Naive thymus-derived CD4-positive, alpha-beta T cell (primary cell): ENCODE measurements at regions of chr1 and their contacts with region 1.

Region 1: GRCh38 chr1:861714-862113 is 62.0 kb upstream of the SAMD11 start:
- DNase-seq: no peak
- ATAC-seq: no peak
- H3K4me3 ChIP-seq: no peak overlapping the region
- H3K4me3 Mint-ChIP-seq: no peak overlapping the region
- H3K27ac ChIP-seq: no peak overlapping the region
- H3K27ac Mint-ChIP-seq: peak overlapping the region in 1 of 9 donors; percentile 4
- H3K4me1 ChIP-seq: peaks cover 0 to 5% of the 10 kb centered on the region in 2 donors
- H3K4me1 Mint-ChIP-seq: peaks cover 0 to 12% (median 10%) of the 10 kb centered on the region in 7 donors
- H3K27me3 ChIP-seq: peaks cover 0 to 6% of the 10 kb centered on the region in 2 donors
- H3K27me3 Mint-ChIP-seq: peaks cover 5 to 23% (median 10%) of the 10 kb centered on the region in 5 donors

Region 2: GRCh38 chr1:820962-821361 is 40.8 kb before region 1 on chr1:
- CTCF ChIA-PET with region 1: no interaction called
- POLR2A ChIA-PET with region 1: no interaction called
- intact Hi-C with region 1: loop called in 1 of 2 experiments (anchors 2 kb)
- DNase-seq: no peak
- ATAC-seq: no peak
- H3K4me3 ChIP-seq: no peak overlapping the region
- H3K4me3 Mint-ChIP-seq: no peak overlapping the region
- H3K27ac ChIP-seq: no peak overlapping the region
- H3K27ac Mint-ChIP-seq: no peak overlapping the region
- H3K4me1 ChIP-seq: peaks cover 2 to 7% of the 10 kb centered on the region in 2 donors
- H3K4me1 Mint-ChIP-seq: peaks cover 6 to 35% (median 23%) of the 10 kb centered on the region in 7 donors
- H3K27me3 ChIP-seq: no peaks in the 10 kb centered on the region
- H3K27me3 Mint-ChIP-seq: no peaks in the 10 kb centered on the region